ENCODE measurements at regions of chr5 and their contacts with region 1.

Region 1: GRCh38 chr5:43484106-43484849 is 613 bp upstream of the TMEM267 start:
- DNase-seq: peak; percentile 86 to 89
- H3K4me3 ChIP-seq: peak overlapping the region; percentile 74 to 83 (median 80)
- H3K27ac ChIP-seq: peak overlapping the region; percentile 94 to 98 (median 97)
- H3K4me1 ChIP-seq: peaks cover 11 to 12% of the 10 kb centered on the region in 2 donors
- H3K27me3 ChIP-seq: no peaks in the 10 kb centered on the region
- CTCF ChIP-seq: peak in 5 of 6 experiments; percentile 52 to 87 (median 80)
- POLR2A ChIP-seq: no peak

Region 2: GRCh38 chr5:43120720-43121564 is 363.3 kb before region 1 on chr5 and contains the start of gene ZNF131:
- intact Hi-C with region 1: loop called (anchors 10 kb)
- DNase-seq: peak; percentile 97
- H3K4me3 ChIP-seq: peak within 1 kb of the TSS; percentile 63 to 79 (median 78)
- H3K27ac ChIP-seq: peak within 1 kb of the TSS; percentile 89 to 95 (median 94)
- H3K4me1 ChIP-seq: peaks cover 16 to 20% of the 10 kb centered on the region in 2 donors
- H3K27me3 ChIP-seq: no peaks in the 10 kb centered on the region
- CTCF ChIP-seq: no peak
- POLR2A ChIP-seq: peak; percentile 57 to 82
- total RNA-seq, gene ZNF131: 38.4 to 48.2 (median 44.2) TPM

Region 3: DNA sequence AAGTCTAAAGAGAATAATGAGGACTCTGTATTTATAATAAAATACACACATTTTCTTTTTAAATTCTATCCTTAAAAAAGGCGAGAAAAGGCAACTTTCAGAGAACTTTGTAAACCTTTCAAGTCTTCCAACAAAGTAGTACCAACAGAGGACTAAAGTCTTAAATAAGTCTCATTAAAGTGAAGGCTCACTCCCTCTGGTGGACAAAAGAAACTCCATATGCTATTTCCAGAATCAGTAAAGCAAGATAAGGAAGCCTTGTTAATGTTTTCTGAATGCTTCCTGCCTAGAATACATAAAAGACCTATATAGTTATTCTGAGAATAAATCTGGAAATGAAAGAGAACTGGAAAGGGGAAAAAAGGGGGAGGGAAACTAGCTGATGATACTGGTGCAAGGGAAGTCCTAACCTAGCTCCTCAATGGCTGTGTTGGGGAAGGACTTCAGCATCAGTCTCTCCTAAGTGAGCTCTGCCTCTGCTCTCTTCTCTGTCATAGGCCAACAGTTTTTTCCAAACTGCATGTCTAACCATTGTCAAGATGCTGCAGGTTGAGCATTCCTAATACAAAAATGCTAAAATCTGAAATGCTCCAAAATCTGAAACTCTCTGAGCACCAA is 178.2 kb before region 1 on chr5:
- intact Hi-C with region 1: no loop called
- DNase-seq: no peak
- H3K4me3 ChIP-seq: no peak overlapping the region
- H3K27ac ChIP-seq: no peak overlapping the region
- H3K4me1 ChIP-seq: peaks cover 14 to 28% of the 10 kb centered on the region in 2 donors
- H3K27me3 ChIP-seq: no peaks in the 10 kb centered on the region
- CTCF ChIP-seq: peak in 5 of 6 experiments; percentile 37 to 70 (median 62)
- POLR2A ChIP-seq: no peak

Region 4: DNA sequence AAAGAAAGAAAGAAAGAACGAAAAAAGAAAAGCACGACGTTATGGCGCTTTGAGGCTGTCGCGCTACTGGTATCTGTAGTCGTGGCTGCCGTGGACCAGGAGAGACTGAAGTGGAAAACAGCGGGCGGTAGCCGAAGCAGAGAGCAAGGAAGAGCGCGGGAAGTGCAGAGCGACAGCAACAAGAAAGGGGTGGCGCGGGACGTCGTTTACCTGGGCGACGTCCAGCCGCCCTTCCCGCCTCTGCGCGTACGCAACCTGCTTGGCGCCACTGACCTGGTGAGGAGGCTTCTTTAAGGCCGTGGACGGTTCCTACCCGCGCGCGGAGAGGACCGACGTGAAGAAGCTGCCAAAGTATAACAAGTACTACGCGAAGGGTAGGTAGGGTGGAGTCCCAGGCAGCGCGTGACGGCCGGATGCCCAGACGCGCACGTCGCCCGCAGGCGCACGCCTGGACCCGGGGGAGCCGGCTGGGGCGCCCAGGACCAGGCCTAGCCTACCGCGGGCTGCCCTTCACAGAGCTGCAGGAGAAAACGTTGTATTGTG is 87.4 kb before region 1 on chr5:
- intact Hi-C with region 1: loop called (anchors 5 kb)
- DNase-seq: peak; percentile 85 to 87
- H3K4me3 ChIP-seq: peak overlapping the region; percentile 27 to 33 (median 30)
- H3K27ac ChIP-seq: peak overlapping the region; percentile 64 to 90 (median 79)
- H3K4me1 ChIP-seq: no peaks in the 10 kb centered on the region
- H3K27me3 ChIP-seq: no peaks in the 10 kb centered on the region
- CTCF ChIP-seq: peak in 1 of 6 experiments; percentile 6
- POLR2A ChIP-seq: peak in 1 of 2 donors; percentile 80

Measured in thyroid gland (tissue), 4 donors.